ENCODE measurements at regions of chr7 and their contacts with region 1.

Region 1: GRCh38 chr7:112449902-112450806 is at the start of gene IFRD1:
- H3K4me3 ChIP-seq: peak within 1 kb of the TSS; percentile 100
- H3K27ac ChIP-seq: peak within 1 kb of the TSS; percentile 84
- H3K4me1 ChIP-seq: peaks cover 10% of the 10 kb centered on the region; the same call in 1 of the 2 replicates
- CTCF ChIP-seq: no peak

Region 2: DNA sequence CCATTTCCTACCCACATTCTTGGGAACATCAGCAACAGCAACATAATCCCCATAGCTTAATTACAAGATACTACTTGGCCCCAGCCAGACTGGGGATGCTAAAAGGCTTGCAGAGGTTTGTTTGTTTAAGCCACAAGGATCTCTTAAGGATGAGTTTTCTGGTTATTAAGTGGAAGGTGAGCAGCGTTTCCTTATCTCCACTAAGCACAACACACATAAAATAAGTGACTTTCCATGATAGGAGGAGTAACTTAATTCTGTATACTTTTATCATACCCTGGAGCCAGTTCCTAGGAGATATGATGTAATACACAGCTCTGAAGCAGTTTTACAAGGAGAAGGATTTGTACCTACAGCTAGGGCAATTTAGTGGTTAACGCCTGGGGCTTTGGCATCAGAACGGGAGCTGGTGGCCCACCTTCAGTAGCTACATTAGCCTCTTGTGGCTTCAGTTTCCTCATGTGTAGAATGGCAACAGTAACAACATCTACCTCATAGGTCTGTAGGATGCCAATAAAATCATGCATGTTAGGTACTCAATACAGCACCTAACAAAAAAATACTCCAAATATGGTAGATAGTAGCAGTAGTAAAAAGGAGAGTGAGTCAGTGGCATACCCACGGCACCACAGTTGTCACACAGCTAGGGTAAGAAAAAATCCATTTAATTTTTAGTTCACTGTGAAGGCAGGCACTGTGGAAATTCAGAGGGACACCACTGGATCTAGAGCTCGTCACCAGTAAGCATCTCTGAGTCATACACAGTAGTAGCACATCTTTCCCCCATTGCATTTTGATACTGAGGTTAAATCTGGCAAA is 299.1 kb before region 1 on chr7:
- CTCF ChIA-PET with region 1: no interaction called
- POLR2A ChIA-PET with region 1: interaction called, 11 read pairs
- H3K4me3 ChIP-seq: no peak overlapping the region
- H3K27ac ChIP-seq: peak overlapping the region; percentile 53
- H3K4me1 ChIP-seq: peaks cover 22% of the 10 kb centered on the region
- CTCF ChIP-seq: no peak

Region 3: DNA sequence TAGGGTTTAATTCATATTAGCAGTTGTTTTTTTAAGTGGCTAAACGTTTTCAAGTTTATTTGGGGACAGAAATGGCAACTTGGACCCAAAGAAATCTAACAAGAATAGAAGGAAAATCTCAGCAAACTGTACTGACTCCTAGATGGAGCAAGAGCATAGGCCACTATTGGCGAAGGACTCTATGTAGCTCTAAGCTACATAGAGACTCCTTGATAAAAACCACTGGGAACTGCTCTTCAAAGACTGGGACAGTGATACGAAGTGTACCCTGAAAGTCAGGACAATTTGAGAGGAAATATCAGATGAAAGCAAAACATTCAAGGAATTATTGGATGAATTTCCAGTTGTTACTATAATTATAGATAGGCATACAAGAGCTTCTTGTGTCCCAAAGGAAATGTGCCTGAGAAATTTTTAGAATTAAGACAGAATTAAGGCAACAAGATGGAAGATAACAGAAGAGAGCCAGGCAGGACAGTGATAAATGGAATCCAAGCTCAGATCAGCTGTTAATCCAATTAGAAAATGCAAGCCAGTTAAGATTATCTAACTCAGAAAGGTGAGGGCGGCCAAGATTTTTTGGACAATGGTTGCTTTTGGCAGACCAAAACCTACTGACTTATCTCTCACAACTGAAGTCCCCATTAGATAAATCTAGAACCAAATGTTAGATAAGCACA is 103.6 kb before region 1 on chr7:
- CTCF ChIA-PET with region 1: no interaction called
- POLR2A ChIA-PET with region 1: no interaction called
- H3K4me3 ChIP-seq: no peak overlapping the region
- H3K27ac ChIP-seq: no peak overlapping the region
- H3K4me1 ChIP-seq: peaks cover 4% of the 10 kb centered on the region; the same call in 1 of the 2 replicates
- CTCF ChIP-seq: no peak

Region 4: GRCh38 chr7:112422842-112423496 is 27.2 kb before region 1 on chr7:
- CTCF ChIA-PET with region 1: interaction called, 3 read pairs
- POLR2A ChIA-PET with region 1: interaction called, 49 read pairs
- H3K4me3 ChIP-seq: no peak overlapping the region
- H3K27ac ChIP-seq: peak overlapping the region; percentile 29; the same call in 1 of the 2 replicates
- H3K4me1 ChIP-seq: peaks cover 8% of the 10 kb centered on the region; the same call in 1 of the 2 replicates
- CTCF ChIP-seq: no peak

Region 5: GRCh38 chr7:112437043-112437442 is 13.1 kb before region 1 on chr7:
- CTCF ChIA-PET with region 1: no interaction called
- POLR2A ChIA-PET with region 1: interaction called, 39 read pairs
- H3K4me3 ChIP-seq: no peak overlapping the region
- H3K27ac ChIP-seq: no peak overlapping the region
- H3K4me1 ChIP-seq: no peaks in the 10 kb centered on the region
- CTCF ChIP-seq: no peak

Region 6: GRCh38 chr7:112481833-112482670 is 31.9 kb after region 1 on chr7:
- CTCF ChIA-PET with region 1: interaction called, 5 read pairs
- POLR2A ChIA-PET with region 1: interaction called, 16 read pairs
- H3K4me3 ChIP-seq: no peak overlapping the region
- H3K27ac ChIP-seq: no peak overlapping the region
- H3K4me1 ChIP-seq: peaks cover 5% of the 10 kb centered on the region
- CTCF ChIP-seq: no peak

Region 7: DNA sequence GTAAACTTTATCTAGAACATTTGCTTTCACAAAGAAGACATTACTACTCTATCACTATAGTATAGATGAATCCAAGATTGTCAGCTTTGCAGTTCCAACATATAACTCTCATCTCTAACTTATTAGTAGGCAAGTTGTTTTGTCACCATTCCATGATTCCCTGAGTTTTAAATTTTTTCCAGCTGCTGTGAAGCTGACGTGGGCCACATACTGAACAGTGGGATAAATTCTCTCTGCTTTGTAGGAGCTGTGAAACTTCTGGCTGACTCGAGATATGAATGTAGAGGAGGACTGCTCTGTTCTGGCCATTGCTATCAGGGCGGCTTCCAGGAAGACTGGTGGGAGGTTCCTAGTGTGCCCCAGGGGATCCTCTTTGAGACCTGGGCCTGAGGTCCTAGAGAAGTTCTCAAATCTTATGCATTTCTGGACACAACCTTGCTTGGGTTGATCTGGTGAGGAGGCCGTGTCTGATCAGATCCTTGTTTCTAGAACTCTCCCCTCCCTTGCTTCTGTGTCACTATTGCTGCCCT is 88.6 kb after region 1 on chr7:
- CTCF ChIA-PET with region 1: no interaction called
- POLR2A ChIA-PET with region 1: no interaction called
- H3K4me3 ChIP-seq: no peak overlapping the region
- H3K27ac ChIP-seq: no peak overlapping the region
- H3K4me1 ChIP-seq: no peaks in the 10 kb centered on the region
- CTCF ChIP-seq: no peak